HEK293T (cell line): ENCODE measurements at regions of chr17 and their contacts with region 1.

Region 1: DNA sequence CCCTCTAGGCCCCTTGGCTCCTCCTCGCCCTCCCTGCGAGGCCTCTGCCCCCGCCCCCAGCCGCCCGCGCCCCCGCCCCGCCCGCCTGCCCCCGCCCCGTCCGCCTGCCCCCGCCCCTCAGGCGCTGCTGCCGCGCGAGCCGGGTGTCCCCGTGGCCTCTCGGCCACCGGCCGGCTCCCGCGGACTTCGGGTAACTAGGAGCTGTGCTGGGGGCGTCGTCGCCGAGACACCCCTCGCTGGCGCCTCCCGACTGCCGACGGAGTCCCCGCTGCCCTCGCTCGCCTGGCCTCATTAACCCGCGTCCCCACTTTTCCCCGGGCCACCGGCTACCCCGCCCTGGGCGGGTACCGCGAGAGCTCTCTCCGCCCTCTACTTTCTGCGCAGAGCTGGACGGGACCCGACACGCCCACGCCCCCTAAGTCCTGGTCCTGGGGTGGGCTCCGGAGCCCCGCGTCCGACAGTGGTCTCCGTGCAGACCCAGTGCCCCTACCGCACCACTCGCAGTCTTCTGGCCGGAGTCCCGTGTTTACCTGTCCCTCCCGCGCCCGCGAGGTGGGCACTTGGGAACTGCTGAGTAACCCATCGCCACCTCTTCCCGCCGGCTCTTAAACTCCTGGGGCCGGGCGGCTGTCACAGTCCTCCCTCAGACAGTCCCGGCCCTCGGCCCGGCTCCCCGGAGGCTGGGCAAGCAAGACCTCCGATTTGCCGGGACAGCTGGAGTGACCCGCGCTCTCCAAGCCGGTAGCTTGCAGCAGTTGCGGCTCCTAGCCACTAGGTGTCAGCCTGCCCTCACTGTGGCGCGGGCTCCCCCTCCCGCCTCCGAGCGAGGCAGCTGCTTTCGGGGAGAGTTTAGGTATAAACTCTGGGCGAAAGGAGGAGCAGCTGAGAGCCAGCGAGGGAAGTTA is at the start of gene TLCD1:
- DNase-seq: peak; percentile 57

Region 2: DNA sequence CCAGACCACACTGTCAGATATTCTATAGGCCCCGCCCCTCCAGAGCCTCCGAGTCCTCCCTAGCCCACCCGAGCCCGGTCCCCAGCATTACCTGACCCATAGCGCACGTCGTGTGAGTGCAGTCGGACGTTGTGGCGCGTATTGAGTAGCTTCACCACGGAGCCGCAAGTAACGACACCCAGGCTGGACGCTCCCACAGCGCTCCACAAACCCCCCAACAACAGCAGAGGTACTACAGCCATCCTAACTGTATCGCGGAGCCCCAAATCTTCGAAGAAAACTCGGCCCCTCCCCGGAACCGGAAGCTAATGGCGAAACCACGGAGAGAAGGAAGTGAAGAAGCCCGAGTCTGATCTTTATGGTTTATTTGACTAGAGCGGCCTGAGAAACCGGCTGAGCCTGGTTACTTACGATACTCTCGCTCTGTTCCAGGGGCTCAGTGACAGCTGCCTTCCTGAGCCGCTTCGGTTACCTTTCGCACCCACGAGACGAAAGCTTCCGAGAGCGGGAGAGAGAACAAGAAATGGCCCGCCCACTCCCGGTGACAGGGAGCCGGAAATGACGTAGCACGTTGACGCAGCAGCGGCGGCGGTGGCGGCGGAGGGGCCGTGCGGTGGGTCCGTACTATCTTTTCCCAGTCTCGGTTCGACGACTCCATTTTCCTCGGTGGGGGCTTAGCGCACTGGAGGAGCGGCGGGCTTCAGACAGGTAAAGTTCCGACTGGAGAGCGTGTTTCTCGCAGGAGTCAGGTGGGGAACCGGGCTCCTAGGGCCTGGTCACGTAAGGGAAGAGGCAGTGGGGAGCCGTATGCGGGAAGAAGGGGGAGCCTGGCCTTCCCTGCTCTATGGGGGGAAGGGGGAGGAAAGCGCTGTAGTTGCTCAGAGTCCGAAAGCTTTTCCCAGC is 64.6 kb before region 1 on chr17 and contains the starts of genes SDF2 and SUPT6H:
- CTCF ChIA-PET with region 1: no interaction called
- POLR2A ChIA-PET with region 1: interaction called, 21 read pairs
- DNase-seq: peak; percentile 89

Region 3: DNA sequence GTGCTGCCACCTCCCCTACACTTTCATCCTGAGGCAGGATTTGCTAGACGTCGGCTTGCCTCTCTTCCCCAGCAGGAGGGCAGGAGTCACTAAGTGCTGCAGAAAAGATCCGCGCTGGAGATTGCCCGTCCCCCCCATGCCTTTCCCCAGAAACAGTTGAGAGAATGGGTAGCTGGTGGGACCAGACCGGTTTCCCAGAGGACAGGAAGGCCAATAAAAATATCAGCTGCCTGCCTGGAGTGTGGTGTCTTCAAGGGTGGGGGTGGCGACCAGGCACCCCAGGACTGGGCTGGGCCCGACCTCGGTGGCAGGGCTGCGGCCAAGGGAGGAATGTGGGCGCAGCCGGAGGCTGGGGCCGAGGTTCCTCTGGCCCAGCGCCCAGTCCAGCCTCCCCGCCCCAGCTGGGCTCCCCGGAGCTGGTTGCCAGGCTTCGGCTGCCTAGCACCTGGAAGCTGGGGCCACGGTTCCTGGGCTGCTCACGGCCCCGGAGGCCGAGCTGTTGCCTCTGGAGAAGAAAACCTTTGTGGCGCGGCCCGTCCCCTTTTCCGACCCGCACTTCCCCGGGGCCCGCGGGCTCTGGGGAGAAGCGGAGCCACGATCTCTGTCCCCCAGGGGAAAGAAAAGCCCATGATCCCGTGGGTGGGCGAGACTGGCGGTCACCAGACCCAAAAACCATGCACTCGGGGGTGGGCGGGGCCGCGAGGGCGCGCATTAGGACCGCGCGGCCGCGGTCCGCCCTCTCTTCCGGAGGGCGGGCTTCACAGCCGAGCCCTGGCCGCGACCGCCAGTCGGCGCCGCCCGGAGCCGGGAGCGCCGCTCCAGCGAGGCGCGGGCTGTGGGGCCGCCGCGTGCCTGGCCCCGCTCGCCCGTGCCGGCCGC is 17.0 kb after region 1 on chr17 and contains the start of gene TRAF4:
- CTCF ChIA-PET with region 1: interaction called, 185 read pairs
- POLR2A ChIA-PET with region 1: interaction called, 409 read pairs
- DNase-seq: peak; percentile 75

Region 4: GRCh38 chr17:28763804-28764266 is 37.4 kb after region 1 on chr17:
- CTCF ChIA-PET with region 1: interaction called, 38 read pairs
- POLR2A ChIA-PET with region 1: interaction called, 56 read pairs
- DNase-seq: peak; percentile 40

Region 5: DNA sequence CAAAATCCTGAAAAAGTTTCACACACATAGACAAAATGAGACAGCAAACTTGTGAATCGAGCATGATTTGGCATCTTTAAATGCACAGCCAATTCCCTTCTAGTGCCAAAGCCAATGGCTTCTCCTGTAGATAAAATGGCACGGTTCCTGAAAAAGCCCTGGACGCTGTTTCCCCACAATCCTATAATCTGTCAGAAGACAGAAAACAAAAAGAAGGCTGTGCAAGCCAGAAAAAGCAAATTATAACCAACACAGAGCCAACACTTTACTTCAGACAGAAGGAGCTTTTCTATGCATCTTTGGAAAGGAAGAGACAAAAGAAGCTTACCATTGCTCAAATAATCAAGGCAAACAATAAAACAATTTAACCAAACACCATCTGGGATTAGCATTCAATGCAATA is 92.3 kb after region 1 on chr17:
- CTCF ChIA-PET with region 1: no interaction called
- POLR2A ChIA-PET with region 1: no interaction called
- DNase-seq: no peak

Region 6: GRCh38 chr17:28842282-28843012 is 116.0 kb after region 1 on chr17 and contains the start of gene FAM222B:
- CTCF ChIA-PET with region 1: interaction called, 8 read pairs
- POLR2A ChIA-PET with region 1: interaction called, 18 read pairs
- DNase-seq: peak; percentile 95

Region 7: DNA sequence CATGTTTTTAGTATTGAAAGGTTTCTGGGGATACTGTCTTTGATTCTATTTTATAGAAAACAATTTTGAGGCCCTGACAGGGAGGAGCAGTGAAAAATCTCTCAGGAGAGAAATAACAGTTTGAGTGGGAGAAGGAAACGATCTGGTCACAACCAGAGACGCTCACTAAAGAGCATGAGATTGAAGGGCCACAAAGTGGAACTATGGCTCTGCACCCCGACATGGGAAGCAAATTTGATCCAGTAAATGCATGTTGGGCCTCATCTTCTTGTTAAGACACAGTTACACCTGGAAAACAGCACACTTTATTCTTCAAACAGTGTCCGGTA is 128.8 kb after region 1 on chr17:
- CTCF ChIA-PET with region 1: no interaction called
- POLR2A ChIA-PET with region 1: no interaction called
- DNase-seq: no peak

Region 8: DNA sequence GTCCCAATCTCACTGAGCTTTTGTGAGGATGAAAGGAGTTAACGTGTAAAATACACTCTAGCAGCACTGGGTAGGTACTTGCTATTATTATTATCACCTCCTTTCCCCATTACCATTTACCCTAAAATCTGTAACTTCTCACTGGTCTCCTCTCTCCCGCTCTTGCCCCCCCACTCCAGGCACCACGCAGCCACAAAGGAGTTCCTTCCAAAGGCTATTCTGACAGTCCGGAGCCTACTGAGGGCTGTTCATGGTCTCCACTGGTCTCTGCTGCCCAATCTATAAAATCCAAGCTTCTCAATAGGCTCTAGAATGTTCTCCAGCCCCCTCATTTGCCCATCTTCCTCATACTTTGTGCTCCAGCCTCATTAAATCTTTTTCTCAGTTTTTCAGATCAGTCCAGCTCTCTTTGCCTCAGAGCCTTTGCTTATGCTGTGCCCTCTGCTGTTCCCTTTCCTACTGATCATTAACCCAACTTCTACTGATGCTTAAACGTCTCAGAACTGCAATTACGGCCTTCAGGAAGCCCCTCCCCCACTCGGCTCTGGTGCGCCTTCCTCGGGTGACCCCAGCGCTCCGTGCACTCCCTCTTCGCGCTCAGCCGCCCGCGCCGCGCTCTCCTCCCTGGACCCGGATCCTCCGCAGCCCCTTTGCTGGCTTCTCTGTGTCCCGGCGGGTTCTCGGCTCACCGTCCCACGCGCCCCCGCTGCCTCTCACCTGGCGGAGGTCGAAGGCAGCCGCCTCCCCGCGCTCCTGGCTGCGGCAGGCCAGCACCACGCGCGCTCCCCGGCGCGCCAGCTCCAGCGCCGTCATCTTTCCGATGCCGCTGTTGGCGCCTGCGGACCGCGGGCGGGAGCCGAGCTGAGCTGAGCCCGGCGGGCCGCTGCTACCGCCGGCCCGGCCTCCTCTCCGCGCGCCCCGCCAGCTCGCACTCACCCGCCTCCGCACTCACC is 175.7 kb after region 1 on chr17:
- CTCF ChIA-PET with region 1: interaction called, 17 read pairs
- POLR2A ChIA-PET with region 1: interaction called, 35 read pairs
- DNase-seq: peak; percentile 35

Region 9: DNA sequence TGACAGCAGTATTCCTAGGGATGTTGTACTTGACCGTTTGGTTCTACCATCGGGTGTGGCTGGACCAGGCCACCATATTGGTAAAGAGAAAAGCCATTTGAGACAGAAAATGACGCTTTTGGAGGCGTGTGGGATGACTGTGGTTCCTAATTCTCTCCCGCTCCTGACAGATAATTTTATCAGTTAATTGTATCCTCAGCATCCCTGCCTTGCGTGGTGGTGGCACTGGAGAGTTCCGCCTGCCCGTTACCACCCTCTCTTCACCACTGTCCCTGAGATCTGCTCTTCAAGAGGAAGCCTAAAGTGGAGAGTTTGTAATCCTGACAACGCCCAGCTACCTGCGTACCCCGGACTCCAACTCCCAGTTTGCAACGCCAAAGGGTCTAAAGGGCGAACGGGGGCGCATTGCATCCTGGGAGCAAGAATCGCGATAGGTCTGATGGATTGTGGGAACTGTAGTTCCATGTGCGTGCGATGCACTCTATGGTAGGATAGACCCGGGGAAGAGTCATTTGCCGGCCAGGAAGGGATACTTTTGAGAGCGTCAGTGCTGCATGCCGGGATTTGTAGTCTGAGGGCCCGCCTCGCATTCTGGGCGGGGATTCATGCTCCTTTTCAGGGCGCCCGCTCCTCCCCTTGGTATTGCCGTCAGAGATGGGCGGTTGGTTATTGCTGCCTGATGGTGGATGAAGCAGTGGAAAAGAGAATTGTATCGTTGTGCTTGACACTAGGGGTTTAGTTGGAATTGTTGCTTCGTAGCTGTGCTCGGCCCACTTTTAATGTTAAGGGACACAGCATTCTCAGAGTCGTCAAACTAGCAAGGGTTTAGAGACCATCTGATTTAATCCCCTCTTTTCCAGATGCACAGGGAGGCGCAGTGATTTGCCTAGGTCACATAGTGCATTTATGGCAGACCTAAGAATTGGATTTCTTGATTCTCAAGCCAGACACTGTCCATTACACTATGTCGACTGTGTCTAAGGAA is 225.8 kb after region 1 on chr17:
- CTCF ChIA-PET with region 1: interaction called, 23 read pairs
- POLR2A ChIA-PET with region 1: interaction called, 61 read pairs
- DNase-seq: peak; percentile 82